ENCODE measurements at regions of chr1 and their contacts with region 1.

Region 1: GRCh38 chr1:42958488-42959319 is at the start of gene SLC2A1:
- DNase-seq: peak; percentile 98 to 99 (median 98)
- ATAC-seq: peak; percentile 84
- H3K4me3 ChIP-seq: peak within 1 kb of the TSS; percentile 91
- H3K27ac ChIP-seq: peak within 1 kb of the TSS; percentile 92
- H3K4me1 ChIP-seq: peaks cover 69 to 71% of the 10 kb centered on the region in 2 experiments
- H3K27me3 ChIP-seq: no peaks in the 10 kb centered on the region
- CTCF ChIP-seq: 0 out of 6 replicates have a peak, but pooled peaks of 1 of the 3 experiments have one; percentile 10
- EP300 ChIP-seq: no peak
- POLR2A ChIP-seq: peak; percentile 98
- RAD21 ChIP-seq: no peak; a peak in 1 of 4 replicates
- polyA plus RNA-seq, gene SLC2A1: 12.6 to 22.9 TPM

Region 2: DNA sequence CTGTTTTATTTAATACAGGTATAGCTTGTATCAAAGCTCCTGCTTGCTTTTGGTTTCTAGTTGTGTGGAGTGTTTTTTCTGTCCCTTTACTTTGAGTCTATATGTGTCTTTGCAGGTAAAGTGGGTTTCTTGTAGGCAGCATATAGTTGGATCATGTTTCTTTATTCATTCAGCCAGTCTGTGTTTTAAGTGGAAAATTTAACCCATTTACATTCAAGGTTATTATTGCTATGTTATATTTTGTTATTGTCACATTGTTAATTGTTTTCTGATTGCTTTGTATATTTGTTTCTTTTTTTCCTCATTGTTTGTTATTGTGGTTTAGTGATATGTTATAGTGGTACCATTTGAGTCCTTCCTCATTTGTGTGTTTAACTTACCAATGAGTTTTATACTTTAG is 245.4 kb before region 1 on chr1:
- CTCF ChIA-PET with region 1: no interaction called
- POLR2A ChIA-PET with region 1: no interaction called
- in situ Hi-C with region 1: no loop called
- intact Hi-C with region 1: no loop called
- DNase-seq: no peak
- ATAC-seq: no peak
- H3K4me3 ChIP-seq: no peak overlapping the region
- H3K27ac ChIP-seq: no peak overlapping the region
- H3K4me1 ChIP-seq: no peaks in the 10 kb centered on the region
- H3K27me3 ChIP-seq: no peaks in the 10 kb centered on the region
- CTCF ChIP-seq: no peak
- EP300 ChIP-seq: no peak
- POLR2A ChIP-seq: no peak
- RAD21 ChIP-seq: no peak

Region 3: DNA sequence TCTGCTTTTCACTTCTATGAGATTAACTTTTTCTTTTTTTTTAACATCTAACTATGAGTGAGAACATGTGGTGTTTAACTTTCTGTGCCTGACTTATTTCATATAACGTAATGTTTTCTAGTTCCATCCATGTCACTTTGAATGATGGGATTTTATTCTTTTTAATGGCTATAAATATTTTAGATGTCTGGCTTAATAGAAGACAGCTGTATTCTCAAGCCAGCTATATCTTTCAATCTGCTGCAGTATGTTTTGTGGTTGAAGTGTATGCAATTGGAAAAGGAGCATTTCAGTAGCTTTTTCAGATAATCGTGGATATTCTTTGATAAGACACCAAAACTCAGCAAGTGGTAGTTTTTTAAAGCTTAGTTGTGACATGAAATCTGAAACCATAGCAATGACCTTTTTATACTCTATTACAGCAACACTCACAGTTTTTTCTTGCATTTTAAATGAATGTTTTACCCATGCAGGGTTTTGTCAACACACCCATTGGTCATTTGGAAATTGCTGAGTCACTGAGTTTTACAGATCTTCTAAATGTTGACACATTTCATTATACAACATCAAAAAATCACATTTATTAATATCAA is 135.8 kb before region 1 on chr1:
- CTCF ChIA-PET with region 1: no interaction called
- POLR2A ChIA-PET with region 1: interaction called, 5 read pairs
- in situ Hi-C with region 1: no loop called
- intact Hi-C with region 1: loop called (anchors 5 kb)
- DNase-seq: peak in 2 of 4 experiments; percentile 44 to 63
- ATAC-seq: no peak
- H3K4me3 ChIP-seq: no peak overlapping the region
- H3K27ac ChIP-seq: peak overlapping the region; percentile 73; the same call in 2 of the 3 replicates
- H3K4me1 ChIP-seq: peaks cover 18 to 58% of the 10 kb centered on the region in 2 experiments
- H3K27me3 ChIP-seq: no peaks in the 10 kb centered on the region
- CTCF ChIP-seq: no peak
- EP300 ChIP-seq: peak; percentile 39; the same call in 1 of the 2 replicates
- POLR2A ChIP-seq: no peak
- RAD21 ChIP-seq: no peak

Region 4: GRCh38 chr1:42936309-42937078 is 22.2 kb before region 1 on chr1:
- CTCF ChIA-PET with region 1: no interaction called
- POLR2A ChIA-PET with region 1: interaction called, 47 read pairs
- in situ Hi-C with region 1: no loop called
- intact Hi-C with region 1: loop called (anchors 1 kb)
- DNase-seq: peak; percentile 93 to 98 (median 95)
- ATAC-seq: peak; percentile 89
- H3K4me3 ChIP-seq: no peak overlapping the region
- H3K27ac ChIP-seq: peak overlapping the region; percentile 74
- H3K4me1 ChIP-seq: peaks cover 96% of the 10 kb centered on the region in 2 experiments
- H3K27me3 ChIP-seq: no peaks in the 10 kb centered on the region
- CTCF ChIP-seq: no peak
- EP300 ChIP-seq: peak; percentile 94
- POLR2A ChIP-seq: 0 out of 2 replicates have a peak, but pooled peaks have one; percentile 5
- RAD21 ChIP-seq: peak in 1 of 2 experiments; percentile 33; a peak in 1 of 4 replicates

Region 5: GRCh38 chr1:42941640-42942330 is 16.9 kb before region 1 on chr1:
- CTCF ChIA-PET with region 1: interaction called, 3 read pairs
- POLR2A ChIA-PET with region 1: interaction called, 47 read pairs
- in situ Hi-C with region 1: no loop called
- intact Hi-C with region 1: loop called (anchors 1 kb)
- DNase-seq: peak; percentile 72 to 93 (median 78)
- ATAC-seq: peak; percentile 82
- H3K4me3 ChIP-seq: no peak overlapping the region
- H3K27ac ChIP-seq: peak overlapping the region; percentile 56
- H3K4me1 ChIP-seq: peaks cover 88 to 90% of the 10 kb centered on the region in 2 experiments
- H3K27me3 ChIP-seq: no peaks in the 10 kb centered on the region
- CTCF ChIP-seq: no peak
- EP300 ChIP-seq: peak; percentile 46; the same call in 1 of the 2 replicates
- POLR2A ChIP-seq: no peak
- RAD21 ChIP-seq: 0 out of 4 replicates have a peak, but pooled peaks of 1 of the 2 experiments have one; percentile 4

Region 6: GRCh38 chr1:42973304-42973703 is 14.6 kb after region 1 on chr1:
- CTCF ChIA-PET with region 1: no interaction called
- POLR2A ChIA-PET with region 1: interaction called, 14 read pairs
- in situ Hi-C with region 1: no loop called
- intact Hi-C with region 1: no loop called
- DNase-seq: no peak
- ATAC-seq: peak; percentile 63
- H3K4me3 ChIP-seq: no peak overlapping the region
- H3K27ac ChIP-seq: no peak overlapping the region
- H3K4me1 ChIP-seq: peaks cover 4 to 11% of the 10 kb centered on the region in 2 experiments; a peak in 3 of 5 replicates
- H3K27me3 ChIP-seq: no peaks in the 10 kb centered on the region
- CTCF ChIP-seq: no peak
- EP300 ChIP-seq: no peak
- POLR2A ChIP-seq: no peak
- RAD21 ChIP-seq: no peak

Region 7: DNA sequence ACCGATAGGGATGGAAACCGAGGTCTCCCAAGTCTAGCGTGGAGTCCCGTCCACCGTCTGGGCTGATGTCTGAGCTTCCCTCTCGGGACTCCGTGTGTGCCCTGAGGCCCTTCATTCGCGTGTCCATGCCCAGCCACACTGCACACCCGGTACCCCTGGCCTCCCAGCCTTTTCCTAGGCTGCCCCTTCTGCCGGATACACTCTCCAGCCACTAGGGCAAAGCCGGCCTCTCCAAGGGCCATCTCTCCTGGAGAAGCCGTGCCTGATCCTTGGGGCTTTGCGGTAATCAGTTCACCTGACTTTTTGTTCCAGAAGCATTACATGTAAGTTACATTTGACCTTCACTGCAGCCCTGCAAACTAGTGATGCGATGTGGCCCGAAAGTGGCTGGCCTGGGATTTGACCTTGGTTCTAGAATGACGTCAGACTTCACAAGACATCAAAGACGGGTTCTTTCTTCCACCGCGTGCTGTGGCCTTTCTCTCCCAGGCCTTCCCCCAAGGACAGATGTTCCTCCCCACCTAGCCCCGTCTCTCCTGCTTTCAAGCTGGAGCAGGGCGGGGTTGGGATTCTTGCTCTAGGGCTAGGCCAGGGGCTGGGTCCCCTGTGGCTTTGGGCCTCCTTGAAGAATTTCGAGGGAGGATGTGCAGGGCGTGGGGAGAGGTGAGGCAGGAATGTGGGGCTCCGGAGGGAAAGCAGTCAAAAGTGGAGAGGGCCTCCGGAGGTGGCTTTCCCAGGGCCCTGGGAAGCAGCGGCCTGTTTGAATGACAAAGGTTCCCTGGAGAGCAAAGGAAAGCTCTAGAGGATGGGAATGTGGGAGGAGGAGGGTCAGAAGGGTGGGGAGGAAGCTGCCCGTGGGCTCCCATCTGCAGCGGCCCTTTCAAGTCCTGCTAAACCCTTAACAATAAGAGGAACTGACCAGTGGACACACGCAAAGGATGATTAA is 49.7 kb after region 1 on chr1:
- CTCF ChIA-PET with region 1: no interaction called
- POLR2A ChIA-PET with region 1: no interaction called
- in situ Hi-C with region 1: no loop called
- intact Hi-C with region 1: loop called (anchors 2 kb)
- DNase-seq: no peak
- ATAC-seq: no peak
- H3K4me3 ChIP-seq: no peak overlapping the region
- H3K27ac ChIP-seq: peak overlapping the region; percentile 51; the same call in 1 of the 3 replicates
- H3K4me1 ChIP-seq: peaks cover 38 to 49% of the 10 kb centered on the region in 2 experiments
- H3K27me3 ChIP-seq: peaks cover 5 to 6% of the 10 kb centered on the region in 2 experiments; a peak in 1 of 5 replicates
- CTCF ChIP-seq: no peak
- EP300 ChIP-seq: no peak
- POLR2A ChIP-seq: no peak
- RAD21 ChIP-seq: no peak

Measured in K562 (cell line).